Left cardiac atrium (tissue), 4 donors: ENCODE measurements at regions of chr11 and their contacts with region 1.

Region 1: DNA sequence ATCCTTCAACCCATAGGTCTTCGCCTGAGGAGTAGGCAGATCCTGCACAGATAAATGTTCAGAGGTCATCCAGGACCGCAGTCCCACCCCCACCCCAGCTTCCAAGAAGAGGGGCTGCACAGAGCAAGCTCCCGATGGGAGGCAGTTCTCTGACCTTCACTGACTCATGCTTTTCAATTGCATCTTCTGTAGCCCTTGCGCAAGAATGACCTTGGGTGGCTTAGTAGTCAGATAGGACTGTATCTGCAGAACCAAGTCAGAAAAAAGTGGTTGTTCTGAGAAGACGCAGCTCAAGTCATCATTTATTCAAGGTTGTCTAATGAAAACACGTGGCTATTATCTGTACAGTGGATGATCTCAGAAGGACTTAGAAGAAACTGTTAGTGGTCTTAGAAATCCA is 16.4 kb upstream of the GRAMD1B start:
- DNase-seq: no peak
- ATAC-seq: no peak

Region 2: DNA sequence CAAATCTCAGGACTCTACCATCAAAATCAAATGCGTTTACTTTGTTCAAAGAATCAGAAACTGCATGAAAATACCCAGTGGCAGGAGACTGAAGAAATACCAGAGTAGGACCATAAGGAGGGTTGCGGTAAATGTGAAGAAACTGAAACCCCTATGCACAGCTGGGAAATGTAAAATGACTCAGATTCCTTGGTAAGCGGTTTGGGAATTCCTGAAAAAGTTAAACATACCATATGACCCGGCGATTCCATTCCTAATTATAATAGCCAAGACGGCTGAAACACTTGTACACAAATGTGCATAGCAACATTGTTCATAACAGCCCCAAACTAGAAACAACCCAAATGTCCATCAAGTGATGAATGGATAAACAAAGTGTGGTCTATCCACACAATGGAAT is 97.6 kb before region 1 on chr11:
- intact Hi-C with region 1: no loop called
- DNase-seq: no peak
- ATAC-seq: no peak

Region 3: DNA sequence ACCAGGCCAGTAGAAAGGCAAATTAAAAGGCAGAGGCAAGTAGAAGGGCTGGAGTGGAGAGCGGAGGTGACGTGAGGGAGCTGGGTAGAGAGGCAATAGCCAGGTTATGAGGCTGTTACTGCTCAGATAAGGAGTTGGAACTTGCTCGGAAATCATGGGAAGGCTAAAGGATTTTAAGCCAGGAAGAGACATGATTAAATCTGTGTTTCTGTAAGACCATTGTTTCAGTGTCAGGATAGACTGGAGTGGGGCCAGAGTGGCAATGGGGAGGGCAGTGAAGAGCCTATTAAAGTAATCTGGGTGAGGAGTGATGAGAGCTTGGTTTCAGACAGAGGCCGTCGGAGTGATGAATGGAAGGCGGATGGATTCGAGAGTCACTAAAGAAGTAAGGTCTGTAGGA is 55.5 kb after region 1 on chr11:
- intact Hi-C with region 1: loop called in 1 of 2 experiments (anchors 5 kb)
- DNase-seq: peak; percentile 40
- ATAC-seq: peak; percentile 44 to 71

Region 4: DNA sequence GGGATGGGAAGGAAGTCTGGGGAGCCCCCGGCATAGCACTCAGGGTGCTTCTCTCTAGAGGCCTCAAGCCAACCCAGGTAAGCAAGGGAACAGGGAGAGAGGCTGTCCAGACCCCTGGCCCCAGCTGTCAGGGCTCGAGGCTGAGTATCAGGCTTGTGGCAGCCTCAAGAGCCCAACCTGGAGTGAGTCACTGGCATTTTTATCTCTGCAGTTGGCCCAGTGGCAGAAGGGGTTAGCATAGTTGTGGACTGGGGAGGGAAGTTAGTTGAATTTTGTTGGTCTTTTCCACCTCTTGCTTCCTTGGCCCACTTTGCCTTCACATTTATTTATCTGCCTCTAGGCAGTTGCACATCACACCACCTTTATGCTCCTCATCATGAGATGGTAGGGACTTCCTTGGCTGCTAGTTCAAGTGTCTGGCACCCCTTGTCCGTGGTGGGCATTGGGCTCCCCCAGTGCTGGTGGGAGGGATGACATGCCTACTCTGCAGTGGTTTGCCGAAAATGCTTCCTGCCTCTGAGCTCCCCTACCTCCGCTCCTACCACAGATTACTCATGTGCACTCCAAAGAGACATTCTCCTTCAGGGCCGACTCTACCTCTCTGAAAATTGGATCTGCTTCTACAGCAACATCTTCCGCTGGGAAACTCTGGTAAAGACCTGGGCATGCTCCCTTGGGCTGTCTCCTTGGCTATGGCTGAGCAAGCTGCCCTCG is 180.7 kb after region 1 on chr11:
- intact Hi-C with region 1: no loop called
- DNase-seq: no peak
- ATAC-seq: peak in 1 of 2 donors; percentile 35